Activated CD8-positive, alpha-beta T cell treated with anti-CD3 and anti-CD28 coated beads for 36 hours (primary cell): ENCODE measurements at regions of chr7 and their contacts with region 1.

Region 1: GRCh38 chr7:86926732-86927131 is 132.7 kb downstream of the ELAPOR2 start:
- DNase-seq: peak; percentile 42
- ATAC-seq: peak; percentile 64
- H3K4me3 Mint-ChIP-seq: no peak overlapping the region
- H3K27ac Mint-ChIP-seq: no peak overlapping the region
- H3K4me1 Mint-ChIP-seq: peaks cover 9% of the 10 kb centered on the region
- H3K27me3 Mint-ChIP-seq: peaks cover 10% of the 10 kb centered on the region
- CTCF ChIP-seq: peak; percentile 77

Region 2: GRCh38 chr7:86313842-86314241 is 612.9 kb before region 1 on chr7:
- CTCF ChIA-PET with region 1: no interaction called
- POLR2A ChIA-PET with region 1: no interaction called
- intact Hi-C with region 1: no loop called
- DNase-seq: no peak
- ATAC-seq: no peak
- H3K4me3 Mint-ChIP-seq: no peak overlapping the region
- H3K27ac Mint-ChIP-seq: no peak overlapping the region
- H3K4me1 Mint-ChIP-seq: no peaks in the 10 kb centered on the region
- H3K27me3 Mint-ChIP-seq: no peaks in the 10 kb centered on the region
- CTCF ChIP-seq: no peak

Region 3: GRCh38 chr7:86908948-86909347 is 17.8 kb before region 1 on chr7:
- CTCF ChIA-PET with region 1: interaction called, 15 read pairs
- POLR2A ChIA-PET with region 1: no interaction called
- intact Hi-C with region 1: no loop called
- DNase-seq: no peak
- ATAC-seq: no peak
- H3K4me3 Mint-ChIP-seq: no peak overlapping the region
- H3K27ac Mint-ChIP-seq: no peak overlapping the region
- H3K4me1 Mint-ChIP-seq: no peaks in the 10 kb centered on the region
- H3K27me3 Mint-ChIP-seq: peaks cover 6% of the 10 kb centered on the region
- CTCF ChIP-seq: no peak

Region 4: GRCh38 chr7:86914551-86914950 is 12.2 kb before region 1 on chr7:
- CTCF ChIA-PET with region 1: interaction called, 19 read pairs
- POLR2A ChIA-PET with region 1: no interaction called
- intact Hi-C with region 1: no loop called
- DNase-seq: no peak
- ATAC-seq: no peak
- H3K4me3 Mint-ChIP-seq: no peak overlapping the region
- H3K27ac Mint-ChIP-seq: no peak overlapping the region
- H3K4me1 Mint-ChIP-seq: no peaks in the 10 kb centered on the region
- H3K27me3 Mint-ChIP-seq: peaks cover 5% of the 10 kb centered on the region
- CTCF ChIP-seq: peak; percentile 77